ENCODE measurements at regions of chr10 and their contacts with region 1.

Region 1: GRCh38 chr10:26725837-26726727 is 28.6 kb downstream of the PDSS1 start:
- DNase-seq: peak; percentile 16 to 57 (median 45)
- ATAC-seq: peak; percentile 74
- H3K4me3 ChIP-seq: no peak overlapping the region
- H3K4me3 Mint-ChIP-seq: no peak overlapping the region
- H3K27ac ChIP-seq: no peak overlapping the region
- H3K27ac Mint-ChIP-seq: peak overlapping the region in 1 of 9 donors; percentile 29
- H3K4me1 ChIP-seq: peaks cover 0 to 13% of the 10 kb centered on the region in 2 donors
- H3K4me1 Mint-ChIP-seq: peaks cover 0 to 15% (median 6%) of the 10 kb centered on the region in 7 donors
- H3K27me3 ChIP-seq: no peaks in the 10 kb centered on the region
- H3K27me3 Mint-ChIP-seq: no peaks in the 10 kb centered on the region

Region 2: DNA sequence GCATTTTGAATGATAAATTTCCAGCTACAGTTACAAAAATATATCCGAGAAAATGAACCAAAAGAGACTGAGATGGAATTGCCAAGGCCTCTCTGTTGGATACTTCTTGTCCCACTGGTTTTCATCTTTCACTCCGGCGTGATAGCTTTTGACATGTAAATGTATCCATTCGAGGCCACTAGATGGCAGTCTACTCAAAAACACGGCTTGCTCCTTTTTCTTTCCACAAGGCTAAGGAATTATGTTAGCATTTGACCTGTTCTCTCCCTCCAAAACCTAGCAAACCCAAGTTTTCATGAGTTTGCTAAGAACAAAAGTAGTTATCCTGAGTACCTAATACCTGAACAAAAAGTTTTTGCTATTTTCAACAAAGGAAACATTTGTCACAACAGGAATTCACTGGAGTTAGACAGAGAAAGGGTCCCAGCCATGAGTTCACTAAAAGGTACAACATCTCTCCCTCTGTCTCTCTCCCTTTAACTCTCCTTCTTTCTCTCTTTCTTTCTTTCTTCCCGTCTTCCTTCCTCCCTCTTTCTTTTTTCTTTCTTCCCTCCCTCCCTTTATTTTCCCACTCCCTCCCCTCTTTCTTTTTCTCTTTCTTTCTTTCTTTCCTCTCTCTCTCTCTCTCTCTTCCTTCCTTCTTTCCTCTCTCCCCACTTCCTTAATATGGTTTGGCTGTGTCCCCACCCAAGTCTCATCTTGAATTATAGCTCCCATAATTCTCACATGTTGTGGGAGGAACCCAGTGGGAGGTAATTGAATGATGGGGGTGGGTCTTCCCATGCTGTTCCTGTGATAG is 1000.0 kb before region 1 on chr10:
- CTCF ChIA-PET with region 1: no interaction called
- POLR2A ChIA-PET with region 1: no interaction called
- intact Hi-C with region 1: loop called in 1 of 2 experiments (anchors 5 kb)
- DNase-seq: peak in 5 of 9 donors; percentile 13 to 31 (median 18)
- ATAC-seq: no peak
- H3K4me3 ChIP-seq: no peak overlapping the region
- H3K4me3 Mint-ChIP-seq: no peak overlapping the region
- H3K27ac ChIP-seq: no peak overlapping the region
- H3K27ac Mint-ChIP-seq: no peak overlapping the region
- H3K4me1 ChIP-seq: no peaks in the 10 kb centered on the region
- H3K4me1 Mint-ChIP-seq: peaks cover 0 to 3% (median 0%) of the 10 kb centered on the region in 7 donors
- H3K27me3 ChIP-seq: no peaks in the 10 kb centered on the region
- H3K27me3 Mint-ChIP-seq: peaks cover 0 to 34% (median 21%) of the 10 kb centered on the region in 5 donors

Region 3: DNA sequence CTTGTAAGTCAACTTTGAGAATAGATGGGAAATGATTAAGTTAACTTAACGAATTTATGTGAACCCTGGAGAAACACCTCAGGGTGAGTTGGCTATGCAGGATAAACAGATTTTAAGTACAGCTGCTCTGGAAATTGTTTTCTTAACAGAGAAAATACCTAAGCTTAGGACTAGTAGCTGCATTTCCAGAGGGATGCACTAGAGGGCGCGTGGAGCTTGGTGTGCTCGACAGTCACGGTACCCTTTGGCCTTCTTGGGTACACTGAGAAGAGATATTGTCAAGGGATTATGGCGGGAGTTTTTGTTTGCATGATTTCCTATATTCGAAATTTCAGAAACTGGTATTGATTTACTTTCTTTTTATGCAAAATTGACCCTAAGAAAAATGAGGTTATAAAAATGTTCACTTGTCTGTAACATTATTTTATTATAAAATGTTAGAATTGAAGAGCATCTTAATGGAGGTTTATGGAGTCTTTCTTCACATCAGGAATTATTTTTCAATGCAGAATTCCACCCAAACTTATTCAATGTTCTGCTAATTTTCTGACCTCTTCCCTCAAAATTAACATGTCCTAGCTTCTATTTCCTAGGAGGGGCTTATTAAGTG is 850.4 kb before region 1 on chr10:
- CTCF ChIA-PET with region 1: no interaction called
- POLR2A ChIA-PET with region 1: no interaction called
- intact Hi-C with region 1: loop called in 1 of 2 experiments (anchors 5 kb)
- DNase-seq: peak; percentile 22 to 65 (median 48)
- ATAC-seq: peak; percentile 76
- H3K4me3 ChIP-seq: no peak overlapping the region
- H3K4me3 Mint-ChIP-seq: no peak overlapping the region
- H3K27ac ChIP-seq: no peak overlapping the region
- H3K27ac Mint-ChIP-seq: no peak overlapping the region
- H3K4me1 ChIP-seq: no peaks in the 10 kb centered on the region
- H3K4me1 Mint-ChIP-seq: no peaks in the 10 kb centered on the region
- H3K27me3 ChIP-seq: no peaks in the 10 kb centered on the region
- H3K27me3 Mint-ChIP-seq: peaks cover 0 to 11% (median 7%) of the 10 kb centered on the region in 5 donors

Region 4: DNA sequence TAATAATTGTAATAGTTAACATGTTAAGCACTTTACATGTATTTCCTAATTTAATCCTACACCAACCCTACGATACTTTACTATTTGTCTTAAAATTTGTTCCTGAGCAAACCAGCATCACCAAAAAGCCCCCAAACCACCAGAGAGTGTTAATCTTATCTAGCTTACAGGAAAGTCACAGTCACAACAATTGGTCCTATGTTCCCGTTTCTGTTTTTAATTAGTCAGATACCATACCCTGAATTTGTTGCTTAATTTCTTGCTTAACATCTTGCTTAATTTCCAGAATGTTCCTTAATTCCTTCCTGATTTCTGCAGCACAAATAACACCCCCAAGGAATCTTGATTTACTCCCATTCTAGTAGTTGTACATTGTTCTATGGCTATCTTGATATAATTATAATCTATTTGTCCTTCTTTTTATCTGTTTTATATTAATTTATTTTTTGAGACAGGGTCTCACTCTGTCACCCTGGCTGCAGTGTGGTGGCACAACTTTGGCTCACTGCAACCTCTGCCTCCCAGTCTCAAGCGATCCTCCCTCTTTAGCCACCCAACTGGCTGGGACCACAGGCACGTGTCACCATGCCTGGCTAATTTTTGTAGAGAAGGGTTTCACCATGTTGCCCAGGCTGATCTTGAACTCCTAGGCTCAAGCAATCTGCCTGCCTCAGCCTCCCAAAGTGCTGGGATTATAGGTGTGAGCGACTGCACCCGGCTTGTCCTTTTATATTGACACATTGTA is 35.2 kb before region 1 on chr10:
- CTCF ChIA-PET with region 1: interaction called, 3 read pairs
- POLR2A ChIA-PET with region 1: no interaction called
- intact Hi-C with region 1: loop called in 1 of 2 experiments (anchors 5 kb)
- DNase-seq: no peak
- ATAC-seq: no peak
- H3K4me3 ChIP-seq: no peak overlapping the region
- H3K4me3 Mint-ChIP-seq: peak overlapping the region in 1 of 10 donors; percentile 20
- H3K27ac ChIP-seq: no peak overlapping the region
- H3K27ac Mint-ChIP-seq: no peak overlapping the region
- H3K4me1 ChIP-seq: no peaks in the 10 kb centered on the region
- H3K4me1 Mint-ChIP-seq: peaks cover 7 to 23% (median 13%) of the 10 kb centered on the region in 7 donors
- H3K27me3 ChIP-seq: no peaks in the 10 kb centered on the region
- H3K27me3 Mint-ChIP-seq: peaks cover 0 to 9% (median 0%) of the 10 kb centered on the region in 5 donors

Region 5: DNA sequence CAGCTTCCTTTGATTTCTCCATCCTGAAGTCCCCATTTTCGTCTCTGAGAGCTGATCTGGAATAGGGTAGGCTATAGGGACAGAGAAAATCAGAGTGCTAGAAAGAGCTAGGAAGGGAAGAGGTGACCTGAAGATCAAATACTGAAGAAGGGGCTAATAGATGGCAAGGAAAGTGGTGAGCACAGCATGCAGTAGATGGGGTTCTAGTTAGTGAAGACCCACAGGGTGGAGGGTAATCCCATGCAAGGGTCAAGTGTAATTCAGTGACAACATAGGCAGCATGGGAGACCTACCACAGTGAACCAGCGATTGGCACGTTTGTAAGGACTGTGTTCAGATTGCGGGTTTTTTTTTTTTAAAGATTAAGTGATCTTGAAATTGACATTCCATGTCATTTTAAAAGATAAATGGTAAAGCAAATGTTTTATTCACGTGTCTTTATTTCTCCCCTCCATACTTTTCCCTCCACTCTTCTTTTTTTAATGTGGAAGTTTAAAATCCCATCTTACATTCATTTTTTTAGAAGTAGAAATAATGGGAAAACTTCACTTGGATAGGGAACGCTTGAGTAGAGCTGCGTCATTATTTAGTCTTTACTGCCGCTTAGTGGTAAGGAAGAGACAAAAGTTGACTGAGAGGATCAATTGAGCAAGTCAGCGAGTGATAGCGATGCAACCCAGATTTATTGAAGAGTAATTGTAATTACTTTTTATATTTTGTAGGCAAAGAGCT is 155.7 kb after region 1 on chr10:
- CTCF ChIA-PET with region 1: interaction called, 56 read pairs
- POLR2A ChIA-PET with region 1: no interaction called
- intact Hi-C with region 1: loop called (anchors 1 kb)
- DNase-seq: peak in 6 of 9 donors; percentile 23 to 60 (median 37)
- ATAC-seq: peak; percentile 87
- H3K4me3 ChIP-seq: no peak overlapping the region
- H3K4me3 Mint-ChIP-seq: no peak overlapping the region
- H3K27ac ChIP-seq: no peak overlapping the region
- H3K27ac Mint-ChIP-seq: no peak overlapping the region
- H3K4me1 ChIP-seq: no peaks in the 10 kb centered on the region
- H3K4me1 Mint-ChIP-seq: peaks cover 0 to 8% (median 0%) of the 10 kb centered on the region in 7 donors
- H3K27me3 ChIP-seq: no peaks in the 10 kb centered on the region
- H3K27me3 Mint-ChIP-seq: peaks cover 4 to 37% (median 13%) of the 10 kb centered on the region in 5 donors

Region 6: GRCh38 chr10:27360581-27361172 is 634.6 kb after region 1 on chr10:
- CTCF ChIA-PET with region 1: no interaction called
- POLR2A ChIA-PET with region 1: no interaction called
- intact Hi-C with region 1: loop called in 1 of 2 experiments (anchors 2 kb)
- DNase-seq: peak; percentile 67 to 85 (median 81)
- ATAC-seq: peak; percentile 97
- H3K4me3 ChIP-seq: no peak overlapping the region
- H3K4me3 Mint-ChIP-seq: no peak overlapping the region
- H3K27ac ChIP-seq: no peak overlapping the region
- H3K27ac Mint-ChIP-seq: no peak overlapping the region
- H3K4me1 ChIP-seq: no peaks in the 10 kb centered on the region
- H3K4me1 Mint-ChIP-seq: no peaks in the 10 kb centered on the region
- H3K27me3 ChIP-seq: no peaks in the 10 kb centered on the region
- H3K27me3 Mint-ChIP-seq: no peaks in the 10 kb centered on the region

Region 7: GRCh38 chr10:28020080-28020860 is 1294.2 kb after region 1 on chr10:
- CTCF ChIA-PET with region 1: no interaction called
- POLR2A ChIA-PET with region 1: no interaction called
- intact Hi-C with region 1: no loop called
- DNase-seq: no peak
- ATAC-seq: no peak
- H3K4me3 ChIP-seq: no peak overlapping the region
- H3K4me3 Mint-ChIP-seq: no peak overlapping the region
- H3K27ac ChIP-seq: no peak overlapping the region
- H3K27ac Mint-ChIP-seq: no peak overlapping the region
- H3K4me1 ChIP-seq: no peaks in the 10 kb centered on the region
- H3K4me1 Mint-ChIP-seq: peaks cover 0 to under 1% (median 0%) of the 10 kb centered on the region in 7 donors
- H3K27me3 ChIP-seq: no peaks in the 10 kb centered on the region
- H3K27me3 Mint-ChIP-seq: peaks cover 12 to 40% (median 22%) of the 10 kb centered on the region in 5 donors

Measured in naive thymus-derived CD4-positive, alpha-beta T cell (primary cell).